Activated T-helper 1 cell treated with anti-CD3 and anti-CD28 coated beads, Interleukin-12 subunit alpha, Interleukin-12 subunit beta, Interleukin-2, Interleukin-4 antibody, amounts not matched to agents 30 ng/mL and 10 ng/mL and 1 ng/mL, durations not matched to agents 14 hours and 24 hours and 36 hours (primary cell): ENCODE measurements at regions of chrX and their contacts with region 1.

Region 1: DNA sequence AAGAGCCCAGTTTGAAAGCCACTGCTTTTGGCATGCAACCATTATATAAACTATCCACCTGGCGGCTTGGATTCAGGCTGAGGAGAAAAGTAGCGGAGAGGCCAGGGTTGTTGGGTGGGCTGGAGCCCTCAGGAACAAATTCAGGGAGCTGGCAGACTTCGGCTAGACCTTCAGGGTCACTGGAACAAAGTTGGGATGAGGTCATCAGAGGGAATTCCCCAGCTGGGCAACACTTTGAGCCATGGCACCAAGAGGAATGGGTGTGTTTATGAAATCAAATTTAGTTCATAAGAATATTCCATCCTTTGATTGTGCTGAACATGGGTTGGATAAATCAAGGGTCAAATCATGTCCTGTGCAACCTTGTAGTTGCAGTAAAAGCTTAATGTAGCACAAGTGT is 22.0 kb downstream of the MTMR1 start:
- DNase-seq: no peak
- H3K4me3 Mint-ChIP-seq: no peak overlapping the region
- H3K27ac Mint-ChIP-seq: no peak overlapping the region
- H3K4me1 Mint-ChIP-seq: peaks cover 11% of the 10 kb centered on the region
- H3K27me3 Mint-ChIP-seq: no peaks in the 10 kb centered on the region

Region 2: GRCh38 chrX:149962859-149963757 is 752.1 kb before region 1 on chrX:
- intact Hi-C with region 1: loop called (anchors 2 kb)
- DNase-seq: no peak
- H3K4me3 Mint-ChIP-seq: no peak overlapping the region
- H3K27ac Mint-ChIP-seq: no peak overlapping the region
- H3K4me1 Mint-ChIP-seq: no peaks in the 10 kb centered on the region
- H3K27me3 Mint-ChIP-seq: no peaks in the 10 kb centered on the region

Region 3: DNA sequence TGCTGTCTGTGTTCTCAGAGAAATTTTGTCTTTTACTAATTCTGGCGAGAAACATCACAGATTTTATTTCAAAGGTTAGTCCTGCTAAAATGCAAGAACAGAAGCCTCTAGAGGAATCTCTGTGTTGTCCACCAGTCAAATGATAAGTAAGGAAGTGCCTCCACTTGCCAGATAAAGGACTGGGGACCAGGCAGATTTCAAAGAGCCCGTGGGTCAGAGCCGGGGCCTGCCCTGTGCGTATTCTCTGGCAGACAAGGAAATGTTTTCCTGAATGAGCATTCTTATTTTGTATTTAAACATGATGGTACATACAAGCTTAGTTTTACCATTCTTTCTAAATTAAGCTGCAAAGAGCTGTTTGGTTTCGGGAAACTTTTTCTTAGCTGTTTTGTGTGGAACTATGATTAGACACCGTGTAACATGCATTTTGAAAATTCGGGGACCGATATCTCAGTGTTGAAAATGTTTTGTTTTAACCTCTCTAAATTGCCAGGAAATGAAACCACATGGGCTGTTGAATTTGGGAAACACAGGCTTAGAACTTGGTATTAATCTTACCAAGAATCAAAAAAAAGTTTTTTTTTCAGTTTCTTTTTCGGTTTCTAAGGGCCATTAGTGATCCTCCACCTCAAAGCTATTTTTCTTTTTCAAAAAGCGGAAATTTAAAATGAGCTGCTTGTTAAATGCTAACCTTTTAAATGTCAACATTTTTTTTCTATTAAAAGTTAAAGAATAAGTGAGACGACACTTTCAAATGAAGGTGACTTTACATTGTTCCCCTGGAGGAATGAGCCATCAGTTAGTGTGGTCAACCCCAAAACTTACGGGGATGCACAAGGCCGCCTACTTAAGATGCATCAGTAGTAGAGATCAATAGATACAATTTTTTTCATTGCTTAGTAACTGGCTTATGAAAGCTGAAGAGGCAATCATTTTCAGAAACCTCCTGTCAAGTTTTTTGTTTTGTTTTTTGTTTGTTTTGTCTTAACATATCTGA is 236.4 kb before region 1 on chrX:
- intact Hi-C with region 1: loop called (anchors 5 kb)
- DNase-seq: peak; percentile 21
- H3K4me3 Mint-ChIP-seq: peak overlapping the region; percentile 66
- H3K27ac Mint-ChIP-seq: peak overlapping the region; percentile 95
- H3K4me1 Mint-ChIP-seq: peaks cover 75% of the 10 kb centered on the region
- H3K27me3 Mint-ChIP-seq: no peaks in the 10 kb centered on the region

Region 4: DNA sequence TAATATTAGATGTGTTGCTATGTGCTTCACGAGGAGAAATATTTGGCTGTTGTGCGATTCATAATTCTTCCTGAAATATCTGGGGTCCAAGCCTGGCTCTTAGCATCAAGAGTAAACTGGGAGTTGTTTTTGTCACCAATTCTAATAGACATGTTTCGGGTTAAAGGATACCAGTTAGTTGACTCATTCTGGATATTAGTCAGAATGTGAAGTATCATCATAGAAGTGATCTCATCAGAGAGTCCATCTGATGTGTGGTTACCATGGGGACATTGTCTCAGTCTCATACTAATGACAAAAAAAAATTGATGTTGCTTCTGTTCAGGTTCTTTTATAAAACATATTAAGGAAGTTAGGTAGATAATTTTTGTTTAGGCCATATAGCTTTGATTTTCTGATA is 79.2 kb before region 1 on chrX:
- intact Hi-C with region 1: loop called (anchors 5 kb)
- DNase-seq: no peak
- H3K4me3 Mint-ChIP-seq: no peak overlapping the region
- H3K27ac Mint-ChIP-seq: peak overlapping the region; percentile 78
- H3K4me1 Mint-ChIP-seq: peaks cover 7% of the 10 kb centered on the region
- H3K27me3 Mint-ChIP-seq: no peaks in the 10 kb centered on the region

Region 5: GRCh38 chrX:150683536-150684146 is 31.5 kb before region 1 on chrX:
- intact Hi-C with region 1: loop called (anchors 1 kb)
- DNase-seq: no peak
- H3K4me3 Mint-ChIP-seq: no peak overlapping the region
- H3K27ac Mint-ChIP-seq: no peak overlapping the region
- H3K4me1 Mint-ChIP-seq: peaks cover 9% of the 10 kb centered on the region
- H3K27me3 Mint-ChIP-seq: no peaks in the 10 kb centered on the region

Region 6: GRCh38 chrX:150731795-150732194 is 16.6 kb after region 1 on chrX:
- intact Hi-C with region 1: no loop called
- DNase-seq: no peak
- H3K4me3 Mint-ChIP-seq: no peak overlapping the region
- H3K27ac Mint-ChIP-seq: peak overlapping the region; percentile 6
- H3K4me1 Mint-ChIP-seq: peaks cover 33% of the 10 kb centered on the region
- H3K27me3 Mint-ChIP-seq: no peaks in the 10 kb centered on the region